H1 (cell line): ENCODE measurements at regions of chr19 and their contacts with region 1.

Region 1: GRCh38 chr19:58305065-58305931 is at the start of gene ERVK3-1:
- DNase-seq: peak; percentile 83 to 91
- H3K4me3 ChIP-seq: peak within 1 kb of the TSS; percentile 87 to 99 (median 98)
- H3K27ac ChIP-seq: peak within 1 kb of the TSS; percentile 63
- H3K4me1 ChIP-seq: peaks cover 0 to 3% (median 1%) of the 10 kb centered on the region in 4 experiments; a peak in 3 of 7 replicates
- H3K27me3 ChIP-seq: no peaks in the 10 kb centered on the region
- CTCF ChIP-seq: no peak
- EP300 ChIP-seq: 0 out of 3 replicates have a peak, but pooled peaks of 1 of the 2 experiments have one; percentile 40
- POLR2A ChIP-seq: peak in 1 of 2 experiments; percentile 71; a peak in 2 of 3 replicates
- RAD21 ChIP-seq: no peak
- total RNA-seq, gene ERVK3-1: 30.6 and 31.5 TPM in 2 replicates

Region 2: DNA sequence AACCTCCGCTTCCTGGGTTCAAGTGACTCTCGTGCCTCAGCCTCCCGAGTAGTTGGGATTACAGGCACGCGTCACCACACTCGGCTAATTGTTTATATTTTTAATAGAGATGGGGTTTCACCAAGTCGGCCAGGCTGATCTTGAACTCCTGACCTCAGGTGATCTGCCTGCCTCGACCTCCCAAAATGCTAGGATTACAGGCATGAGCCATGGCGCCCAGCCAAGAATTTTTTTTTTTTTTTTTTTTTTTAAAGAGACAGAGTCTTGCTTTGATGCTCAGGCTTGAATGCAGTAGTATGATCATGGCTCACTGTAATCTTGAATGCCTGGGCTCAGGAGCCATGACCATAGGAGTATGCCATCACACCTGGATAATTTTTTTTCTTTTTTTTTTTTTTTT is 160.8 kb before region 1 on chr19:
- CTCF ChIA-PET with region 1: no interaction called
- POLR2A ChIA-PET with region 1: no interaction called
- DNase-seq: no peak
- H3K4me3 ChIP-seq: no peak overlapping the region
- H3K27ac ChIP-seq: no peak overlapping the region
- H3K4me1 ChIP-seq: no peaks in the 10 kb centered on the region
- H3K27me3 ChIP-seq: no peaks in the 10 kb centered on the region
- CTCF ChIP-seq: no peak
- EP300 ChIP-seq: no peak
- POLR2A ChIP-seq: no peak
- RAD21 ChIP-seq: no peak

Region 3: GRCh38 chr19:58237324-58237723 is 68.0 kb before region 1 on chr19:
- CTCF ChIA-PET with region 1: interaction called, 4 read pairs
- POLR2A ChIA-PET with region 1: interaction called, 14 read pairs
- DNase-seq: no peak
- H3K4me3 ChIP-seq: no peak overlapping the region
- H3K27ac ChIP-seq: no peak overlapping the region
- H3K4me1 ChIP-seq: no peaks in the 10 kb centered on the region
- H3K27me3 ChIP-seq: no peaks in the 10 kb centered on the region
- CTCF ChIP-seq: no peak
- EP300 ChIP-seq: no peak
- POLR2A ChIP-seq: no peak
- RAD21 ChIP-seq: no peak

Region 4: GRCh38 chr19:58285947-58286346 is 19.4 kb before region 1 on chr19:
- CTCF ChIA-PET with region 1: interaction called, 3 read pairs
- POLR2A ChIA-PET with region 1: interaction called, 13 read pairs
- DNase-seq: no peak
- H3K4me3 ChIP-seq: no peak overlapping the region
- H3K27ac ChIP-seq: no peak overlapping the region
- H3K4me1 ChIP-seq: no peaks in the 10 kb centered on the region
- H3K27me3 ChIP-seq: no peaks in the 10 kb centered on the region
- CTCF ChIP-seq: no peak
- EP300 ChIP-seq: no peak
- POLR2A ChIP-seq: no peak
- RAD21 ChIP-seq: no peak

Region 5: DNA sequence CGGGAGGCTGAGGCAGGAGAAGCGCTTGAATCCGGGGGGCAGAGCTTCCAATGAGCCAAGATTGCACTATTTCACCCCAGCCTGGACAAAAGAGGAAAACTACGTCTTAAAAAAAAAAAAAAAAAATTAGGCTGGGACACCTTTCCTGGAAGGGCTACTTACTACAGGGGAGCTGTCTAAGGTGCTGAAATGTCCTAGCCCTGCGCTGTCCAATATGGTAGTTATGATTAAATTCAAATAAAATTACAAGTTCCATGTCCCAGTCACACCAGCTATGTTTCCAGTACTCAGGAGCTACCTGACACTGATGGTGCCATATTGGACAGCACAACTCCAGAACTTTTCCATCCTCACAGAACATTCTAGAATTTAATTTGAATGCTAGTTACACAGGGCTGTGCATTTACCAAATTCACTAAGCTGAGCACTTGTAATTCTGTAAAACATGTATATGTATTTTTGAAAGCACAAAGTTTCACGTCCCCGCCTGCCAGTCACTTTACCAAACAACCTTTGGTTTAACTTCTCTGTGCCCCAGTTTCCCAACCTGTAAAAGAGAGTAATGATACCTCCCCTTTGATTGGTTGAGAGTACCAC is 12.3 kb after region 1 on chr19:
- CTCF ChIA-PET with region 1: interaction called, 13 read pairs
- POLR2A ChIA-PET with region 1: interaction called, 6 read pairs
- DNase-seq: no peak
- H3K4me3 ChIP-seq: no peak overlapping the region
- H3K27ac ChIP-seq: no peak overlapping the region
- H3K4me1 ChIP-seq: no peaks in the 10 kb centered on the region
- H3K27me3 ChIP-seq: no peaks in the 10 kb centered on the region; a peak in 1 of 7 replicates
- CTCF ChIP-seq: no peak
- EP300 ChIP-seq: no peak
- POLR2A ChIP-seq: no peak
- RAD21 ChIP-seq: no peak

Region 6: GRCh38 chr19:58416604-58417003 is 111.3 kb after region 1 on chr19:
- CTCF ChIA-PET with region 1: no interaction called
- POLR2A ChIA-PET with region 1: no interaction called
- DNase-seq: no peak
- H3K4me3 ChIP-seq: no peak overlapping the region
- H3K27ac ChIP-seq: no peak overlapping the region
- H3K4me1 ChIP-seq: no peaks in the 10 kb centered on the region
- H3K27me3 ChIP-seq: no peaks in the 10 kb centered on the region
- CTCF ChIP-seq: no peak
- EP300 ChIP-seq: no peak
- POLR2A ChIP-seq: no peak
- RAD21 ChIP-seq: no peak